Calu3 (cell line): ENCODE measurements at regions of chr2 and their contacts with region 1.

Region 1: DNA sequence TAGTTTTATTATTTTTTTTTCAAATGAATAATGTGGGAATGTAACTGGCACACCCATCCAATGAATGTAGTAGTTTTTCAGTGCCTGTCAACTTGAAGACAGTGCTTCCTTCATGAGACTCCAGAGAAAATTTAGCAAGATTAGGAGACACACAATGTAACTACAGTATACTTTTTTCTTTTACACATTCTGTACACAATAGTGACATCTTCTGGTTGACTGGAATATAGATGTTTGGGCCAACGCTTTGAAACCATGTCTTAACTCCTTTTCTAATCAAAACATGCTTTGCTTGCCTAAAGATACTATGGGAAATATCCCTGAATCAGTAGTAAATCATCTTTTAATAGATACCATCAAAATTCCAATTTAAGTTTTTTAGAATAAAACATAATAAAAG is 229.5 kb upstream of the ZC3H15 start:
- DNase-seq: peak; percentile 2
- H3K4me3 Mint-ChIP-seq: no peak overlapping the region
- H3K27ac Mint-ChIP-seq: no peak overlapping the region
- H3K4me1 Mint-ChIP-seq: no peaks in the 10 kb centered on the region
- H3K27me3 Mint-ChIP-seq: no peaks in the 10 kb centered on the region
- CTCF ChIP-seq: peak; percentile 51

Region 2: GRCh38 chr2:185208261-185208660 is 1048.3 kb before region 1 on chr2:
- CTCF ChIA-PET with region 1: no interaction called
- intact Hi-C with region 1: loop called (anchors 10 kb)
- DNase-seq: peak; percentile 73
- H3K4me3 Mint-ChIP-seq: no peak overlapping the region
- H3K27ac Mint-ChIP-seq: no peak overlapping the region
- H3K4me1 Mint-ChIP-seq: peaks cover 9% of the 10 kb centered on the region
- H3K27me3 Mint-ChIP-seq: no peaks in the 10 kb centered on the region
- CTCF ChIP-seq: peak; percentile 60

Region 3: DNA sequence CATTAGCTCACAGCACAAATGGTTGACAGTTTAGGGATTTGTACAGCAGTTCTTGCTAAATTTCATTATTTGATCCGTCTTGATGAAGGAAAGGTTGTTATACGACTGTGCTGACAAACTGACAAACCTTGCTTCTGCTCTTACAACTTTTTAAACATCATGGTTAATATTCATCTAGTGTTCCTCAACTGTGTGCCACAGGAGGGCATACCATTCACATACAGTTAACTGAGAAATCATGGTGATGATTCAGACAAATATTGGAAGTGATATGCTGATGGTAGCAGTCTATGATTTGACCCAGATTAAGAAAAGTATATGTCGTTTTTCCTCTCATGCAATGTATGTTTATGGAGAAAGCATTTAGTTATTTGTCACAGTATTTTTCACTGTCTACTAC is 647.7 kb before region 1 on chr2:
- CTCF ChIA-PET with region 1: no interaction called
- intact Hi-C with region 1: loop called (anchors 1 kb)
- DNase-seq: peak; percentile 28
- H3K4me3 Mint-ChIP-seq: peak overlapping the region; percentile 10
- H3K27ac Mint-ChIP-seq: no peak overlapping the region
- H3K4me1 Mint-ChIP-seq: no peaks in the 10 kb centered on the region
- H3K27me3 Mint-ChIP-seq: no peaks in the 10 kb centered on the region
- CTCF ChIP-seq: no peak

Region 4: GRCh38 chr2:185979546-185980071 is 276.9 kb before region 1 on chr2:
- CTCF ChIA-PET with region 1: interaction called, 5 read pairs
- intact Hi-C with region 1: loop called (anchors 1 kb)
- DNase-seq: peak; percentile 35
- H3K4me3 Mint-ChIP-seq: no peak overlapping the region
- H3K27ac Mint-ChIP-seq: no peak overlapping the region
- H3K4me1 Mint-ChIP-seq: peaks cover 7% of the 10 kb centered on the region
- H3K27me3 Mint-ChIP-seq: no peaks in the 10 kb centered on the region
- CTCF ChIP-seq: no peak

Region 5: GRCh38 chr2:186281726-186282125 is 25.2 kb after region 1 on chr2:
- CTCF ChIA-PET with region 1: no interaction called
- intact Hi-C with region 1: loop called (anchors 1 kb)
- DNase-seq: no peak
- H3K4me3 Mint-ChIP-seq: no peak overlapping the region
- H3K27ac Mint-ChIP-seq: no peak overlapping the region
- H3K4me1 Mint-ChIP-seq: no peaks in the 10 kb centered on the region
- H3K27me3 Mint-ChIP-seq: no peaks in the 10 kb centered on the region
- CTCF ChIP-seq: no peak

Region 6: DNA sequence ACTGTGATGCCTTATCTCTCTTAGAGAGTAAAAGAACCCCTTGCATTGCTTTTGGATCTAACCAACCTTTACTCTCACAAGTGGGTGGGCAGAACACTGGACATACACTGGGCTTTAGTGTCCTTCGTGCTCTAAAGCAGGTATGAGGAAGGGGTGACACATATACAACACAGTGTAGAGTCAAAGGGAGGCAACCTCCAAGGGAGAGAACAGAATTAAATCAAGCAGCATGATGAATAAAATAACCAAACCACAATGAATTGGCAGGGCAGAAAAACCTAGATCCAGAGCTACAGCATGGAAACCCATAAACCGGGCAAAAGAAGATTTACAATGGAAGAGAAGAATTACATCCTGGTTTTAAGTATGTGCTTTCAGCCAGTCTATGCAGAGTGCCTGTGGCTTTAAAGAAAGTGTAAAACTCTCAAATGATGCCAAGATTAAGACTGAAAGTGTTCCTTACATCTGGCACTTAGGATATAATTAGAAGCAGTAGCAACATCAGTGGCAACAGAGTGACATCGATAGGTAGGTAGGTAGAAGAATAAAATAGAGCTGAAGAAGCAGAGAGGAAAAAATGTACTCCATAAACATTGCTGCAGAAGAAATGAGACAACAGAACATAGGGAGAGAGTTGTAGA is 37.8 kb after region 1 on chr2:
- CTCF ChIA-PET with region 1: no interaction called
- intact Hi-C with region 1: no loop called
- DNase-seq: no peak
- H3K4me3 Mint-ChIP-seq: no peak overlapping the region
- H3K27ac Mint-ChIP-seq: no peak overlapping the region
- H3K4me1 Mint-ChIP-seq: no peaks in the 10 kb centered on the region
- H3K27me3 Mint-ChIP-seq: no peaks in the 10 kb centered on the region
- CTCF ChIP-seq: no peak

Region 7: DNA sequence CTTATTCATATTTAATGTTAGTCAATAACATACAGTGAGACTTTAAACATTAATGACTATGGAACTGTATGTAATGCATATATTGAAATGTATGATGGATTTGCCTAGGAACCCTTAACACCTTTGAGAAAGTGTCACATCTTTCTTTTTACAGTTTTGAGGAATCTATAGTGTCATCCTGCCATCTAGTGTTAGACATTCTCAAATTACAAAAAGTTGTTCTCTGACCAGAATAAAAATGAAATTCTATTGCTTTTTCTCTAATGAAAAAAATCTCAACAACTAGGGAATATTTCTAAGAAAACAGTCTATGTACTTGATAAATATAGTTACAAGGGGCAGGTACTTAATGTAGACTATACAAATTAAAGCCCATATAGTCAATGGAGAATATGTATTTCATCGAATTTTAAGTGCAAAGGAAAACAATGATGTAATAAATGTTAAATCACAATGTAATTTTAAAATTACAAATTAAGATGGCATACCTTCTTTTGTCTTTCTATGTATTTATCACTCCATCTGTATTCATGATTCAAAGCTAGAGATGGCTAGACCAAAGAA is 1196.6 kb after region 1 on chr2:
- CTCF ChIA-PET with region 1: no interaction called
- intact Hi-C with region 1: no loop called
- DNase-seq: no peak
- H3K4me3 Mint-ChIP-seq: no peak overlapping the region
- H3K27ac Mint-ChIP-seq: no peak overlapping the region
- H3K4me1 Mint-ChIP-seq: peaks cover 6% of the 10 kb centered on the region
- H3K27me3 Mint-ChIP-seq: no peaks in the 10 kb centered on the region
- CTCF ChIP-seq: peak; percentile 47